ENCODE measurements at regions of chr6 and their contacts with region 1.

Region 1: DNA sequence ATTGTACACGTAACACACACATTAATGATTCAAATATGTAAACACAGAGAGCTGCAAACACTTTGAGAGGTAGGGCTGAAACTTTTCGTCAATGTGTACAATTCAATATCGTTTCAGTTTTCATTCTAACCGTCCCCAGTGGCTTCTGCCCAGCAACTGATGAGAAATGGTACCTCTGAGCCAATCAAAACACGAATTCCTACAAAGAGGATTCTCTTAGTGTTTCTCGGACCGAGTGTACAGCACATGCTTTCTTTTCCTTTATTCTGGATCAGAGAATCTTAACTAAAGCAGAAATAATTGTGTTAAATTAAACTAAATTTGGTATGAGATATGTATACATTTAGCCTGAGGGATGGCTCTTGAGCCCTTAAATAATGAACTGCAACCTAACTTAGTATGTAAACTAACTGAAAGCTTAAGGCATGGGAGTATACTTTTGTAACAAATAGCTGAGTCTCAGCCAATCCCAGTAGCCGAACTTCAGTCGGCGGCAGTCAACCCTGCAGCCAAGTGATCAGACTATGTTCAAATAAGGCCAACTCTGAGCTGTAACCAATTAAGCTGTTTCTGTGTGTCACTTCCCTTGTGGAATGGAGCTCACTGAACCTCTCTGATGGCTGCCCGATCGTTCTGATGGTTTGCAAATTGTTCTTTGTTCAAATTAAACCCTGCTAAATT is 16.1 kb downstream of the BTN2A1 start:
- DNase-seq: peak; percentile 60 to 96 (median 76)
- ATAC-seq: peak; percentile 91
- H3K4me3 ChIP-seq: peak overlapping the region; percentile 56
- H3K4me3 Mint-ChIP-seq: peak overlapping the region; percentile 94
- H3K27ac ChIP-seq: peak overlapping the region; percentile 85 to 90
- H3K27ac Mint-ChIP-seq: peak overlapping the region; percentile 99
- H3K4me1 ChIP-seq: peaks cover 45% of the 10 kb centered on the region
- H3K4me1 Mint-ChIP-seq: peaks cover 64% of the 10 kb centered on the region
- H3K27me3 ChIP-seq: no peaks in the 10 kb centered on the region
- H3K27me3 Mint-ChIP-seq: no peaks in the 10 kb centered on the region
- CTCF ChIP-seq: no peak

Region 2: DNA sequence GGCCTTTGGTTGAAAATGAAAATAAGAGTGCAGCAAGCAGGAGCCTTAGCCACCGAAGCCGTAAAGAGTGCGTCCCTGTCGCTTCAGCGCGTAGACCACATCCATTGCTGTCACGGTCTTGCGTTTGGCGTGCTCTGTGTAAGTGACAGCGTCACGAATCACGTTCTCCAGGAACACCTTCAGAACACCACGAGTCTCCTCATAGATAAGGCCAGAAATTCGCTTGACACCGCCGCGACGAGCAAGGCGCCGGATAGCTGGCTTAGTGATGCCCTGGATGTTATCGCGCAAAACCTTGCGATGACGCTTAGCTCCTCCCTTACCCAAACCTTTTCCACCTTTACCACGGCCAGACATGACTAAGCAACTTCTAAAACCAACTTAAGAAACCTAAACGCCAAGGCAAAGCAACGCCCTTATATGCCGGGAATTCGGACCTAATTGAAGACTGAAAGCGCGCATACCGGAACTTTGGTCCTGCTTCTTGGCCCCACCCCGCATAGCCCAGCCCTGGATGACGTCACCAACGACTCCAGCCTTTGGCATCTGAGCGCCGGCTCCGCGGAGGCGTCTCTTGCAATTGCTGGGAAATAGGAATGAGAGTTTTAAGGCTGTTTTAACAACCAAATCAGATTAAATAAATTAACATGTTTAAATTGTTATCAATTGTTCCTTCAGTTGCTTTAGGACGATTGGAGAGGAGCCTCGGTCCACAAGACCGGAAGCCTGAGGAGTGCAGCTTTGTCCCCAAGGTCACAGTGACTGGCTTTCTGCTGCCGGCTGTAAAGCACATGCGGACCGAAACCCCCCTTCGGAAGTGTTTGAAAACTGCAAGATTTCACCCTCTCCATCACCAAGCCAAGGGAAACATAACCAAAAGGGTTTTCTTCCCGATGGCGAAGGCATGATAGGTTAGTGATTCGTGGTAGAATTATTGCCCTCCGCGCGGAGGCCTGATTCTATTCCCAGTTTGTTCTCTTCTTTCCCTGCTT is 188.5 kb before region 1 on chr6:
- CTCF ChIA-PET with region 1: no interaction called
- POLR2A ChIA-PET with region 1: interaction called, 12 read pairs
- intact Hi-C with region 1: no loop called
- DNase-seq: peak; percentile 85 to 99 (median 92)
- ATAC-seq: peak; percentile 82
- H3K4me3 ChIP-seq: peak overlapping the region; percentile 62
- H3K4me3 Mint-ChIP-seq: peak overlapping the region; percentile 87
- H3K27ac ChIP-seq: peak overlapping the region; percentile 82 to 85
- H3K27ac Mint-ChIP-seq: peak overlapping the region; percentile 96
- H3K4me1 ChIP-seq: peaks cover 16% of the 10 kb centered on the region
- H3K4me1 Mint-ChIP-seq: peaks cover 24% of the 10 kb centered on the region
- H3K27me3 ChIP-seq: no peaks in the 10 kb centered on the region
- H3K27me3 Mint-ChIP-seq: peaks cover 11% of the 10 kb centered on the region
- CTCF ChIP-seq: no peak

Region 3: DNA sequence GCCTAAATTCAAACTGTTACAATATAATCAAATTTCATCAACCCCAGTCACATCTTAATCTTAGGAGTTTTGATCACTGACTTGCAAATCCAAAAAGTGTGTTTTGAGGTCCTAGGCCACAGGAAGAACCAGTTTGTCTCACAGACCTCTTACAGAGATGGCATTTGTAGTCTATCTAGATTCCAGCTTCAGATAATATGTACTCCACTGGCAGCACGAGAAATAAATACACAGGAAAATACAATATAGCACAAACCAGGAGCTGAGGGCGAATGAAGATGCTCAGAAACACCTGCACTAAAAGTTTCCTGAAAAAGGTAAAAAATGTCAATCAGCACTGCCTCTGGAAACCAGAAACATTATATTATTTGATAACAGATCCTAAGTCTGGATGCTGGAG is 34.2 kb before region 1 on chr6:
- CTCF ChIA-PET with region 1: no interaction called
- POLR2A ChIA-PET with region 1: interaction called, 15 read pairs
- intact Hi-C with region 1: loop called in 1 of 2 experiments (anchors 1 kb)
- DNase-seq: peak in 1 of 14 experiments; percentile 50
- ATAC-seq: no peak
- H3K4me3 ChIP-seq: peak overlapping the region; percentile 89
- H3K4me3 Mint-ChIP-seq: peak overlapping the region; percentile 93
- H3K27ac ChIP-seq: peak overlapping the region; percentile 86 to 95
- H3K27ac Mint-ChIP-seq: peak overlapping the region; percentile 99
- H3K4me1 ChIP-seq: peaks cover 28% of the 10 kb centered on the region
- H3K4me1 Mint-ChIP-seq: peaks cover 54% of the 10 kb centered on the region
- H3K27me3 ChIP-seq: no peaks in the 10 kb centered on the region
- H3K27me3 Mint-ChIP-seq: no peaks in the 10 kb centered on the region
- CTCF ChIP-seq: no peak

Region 4: DNA sequence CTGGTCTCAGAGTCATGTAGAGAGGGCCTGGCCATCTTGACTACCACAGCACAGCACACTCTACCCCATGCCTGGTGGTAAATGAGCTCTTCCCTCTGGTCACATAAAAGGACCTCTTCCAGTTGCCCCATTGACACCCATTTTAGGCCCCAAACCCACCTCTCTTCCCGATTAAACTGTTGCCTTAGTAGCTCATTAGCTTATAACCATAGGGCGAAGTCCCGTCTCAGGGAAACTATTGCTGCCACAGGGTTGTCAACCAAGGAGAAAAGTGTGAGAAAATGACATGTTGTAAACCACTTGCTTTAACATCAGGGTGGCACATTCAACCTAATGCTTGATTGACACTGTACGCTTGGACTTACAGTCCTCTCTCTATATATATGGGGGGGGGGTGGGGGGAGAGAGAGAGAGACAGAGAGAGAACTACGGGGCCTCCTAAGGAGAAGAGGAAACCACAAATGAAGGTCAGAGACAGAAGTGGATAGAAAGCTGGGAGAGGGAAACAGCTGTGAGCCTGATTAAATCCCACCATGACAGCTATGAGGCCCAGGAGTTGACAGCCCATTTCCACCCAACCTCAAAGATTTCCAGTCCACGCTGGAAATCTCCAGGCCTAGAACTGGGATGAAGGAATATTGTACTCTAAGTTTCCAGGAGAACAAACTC is 11.3 kb after region 1 on chr6:
- CTCF ChIA-PET with region 1: no interaction called
- POLR2A ChIA-PET with region 1: interaction called, 10 read pairs
- intact Hi-C with region 1: no loop called
- DNase-seq: no peak
- ATAC-seq: no peak
- H3K4me3 ChIP-seq: no peak overlapping the region
- H3K4me3 Mint-ChIP-seq: no peak overlapping the region
- H3K27ac ChIP-seq: no peak overlapping the region
- H3K27ac Mint-ChIP-seq: no peak overlapping the region
- H3K4me1 ChIP-seq: no peaks in the 10 kb centered on the region
- H3K4me1 Mint-ChIP-seq: no peaks in the 10 kb centered on the region
- H3K27me3 ChIP-seq: no peaks in the 10 kb centered on the region
- H3K27me3 Mint-ChIP-seq: no peaks in the 10 kb centered on the region
- CTCF ChIP-seq: no peak

Region 5: DNA sequence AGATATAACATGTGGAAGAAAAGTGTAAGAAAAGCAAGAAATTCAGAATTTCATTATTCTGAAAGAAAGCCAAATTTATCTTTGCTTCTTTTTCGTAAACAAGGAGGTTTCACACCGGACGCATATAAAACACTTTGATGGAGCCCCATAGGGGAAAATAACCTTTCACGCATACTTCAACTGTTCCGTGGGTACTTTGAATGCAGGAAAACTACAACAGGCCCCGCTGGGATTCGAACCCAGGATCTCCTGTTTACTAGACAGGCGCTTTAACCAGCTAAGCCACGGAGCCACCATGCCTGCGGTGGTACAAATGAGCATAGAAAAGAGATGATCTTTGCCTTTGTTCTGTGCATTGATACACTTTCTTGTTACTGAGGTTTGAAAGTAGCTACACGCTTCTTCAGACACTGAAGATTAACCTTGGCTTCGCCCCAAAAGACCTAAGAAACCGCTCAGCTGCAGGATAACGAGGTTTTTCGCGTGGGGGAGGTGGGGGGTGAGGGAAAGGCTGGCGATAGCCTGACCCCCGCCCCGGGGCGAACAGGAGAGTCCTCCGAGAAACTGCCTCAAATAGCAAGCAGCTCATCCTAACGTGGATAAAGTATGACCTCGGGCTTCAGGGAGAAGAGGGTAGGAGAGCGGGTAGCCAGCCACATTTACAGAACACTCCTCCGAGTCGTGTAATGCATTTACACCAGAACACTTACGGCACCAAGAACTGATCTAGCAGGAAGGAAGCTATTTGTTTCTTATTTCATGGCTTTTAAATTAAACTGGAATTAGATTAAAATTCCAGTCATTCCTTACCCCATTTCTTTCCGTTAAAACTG is 59.0 kb after region 1 on chr6:
- CTCF ChIA-PET with region 1: interaction called, 4 read pairs
- POLR2A ChIA-PET with region 1: interaction called, 102 read pairs
- intact Hi-C with region 1: loop called in 1 of 2 experiments (anchors 2 kb)
- DNase-seq: peak; percentile 79 to 96 (median 90)
- ATAC-seq: peak; percentile 36
- H3K4me3 ChIP-seq: peak overlapping the region; percentile 72
- H3K4me3 Mint-ChIP-seq: peak overlapping the region; percentile 98
- H3K27ac ChIP-seq: peak overlapping the region; percentile 20 to 59
- H3K27ac Mint-ChIP-seq: peak overlapping the region; percentile 97
- H3K4me1 ChIP-seq: peaks cover 28% of the 10 kb centered on the region
- H3K4me1 Mint-ChIP-seq: peaks cover 50% of the 10 kb centered on the region
- H3K27me3 ChIP-seq: no peaks in the 10 kb centered on the region
- H3K27me3 Mint-ChIP-seq: peaks cover 16% of the 10 kb centered on the region
- CTCF ChIP-seq: no peak

Region 6: GRCh38 chr6:26568601-26569432 is 94.9 kb after region 1 on chr6:
- CTCF ChIA-PET with region 1: interaction called, 4 read pairs
- POLR2A ChIA-PET with region 1: interaction called, 10 read pairs
- intact Hi-C with region 1: no loop called
- DNase-seq: peak; percentile 96 to 100 (median 98)
- ATAC-seq: peak; percentile 74
- H3K4me3 ChIP-seq: peak overlapping the region; percentile 55
- H3K4me3 Mint-ChIP-seq: peak overlapping the region; percentile 97
- H3K27ac ChIP-seq: peak overlapping the region; percentile 37 to 53
- H3K27ac Mint-ChIP-seq: peak overlapping the region; percentile 100
- H3K4me1 ChIP-seq: peaks cover 21% of the 10 kb centered on the region
- H3K4me1 Mint-ChIP-seq: peaks cover 29% of the 10 kb centered on the region
- H3K27me3 ChIP-seq: no peaks in the 10 kb centered on the region
- H3K27me3 Mint-ChIP-seq: peaks cover 16% of the 10 kb centered on the region
- CTCF ChIP-seq: peak; percentile 58

Region 7: DNA sequence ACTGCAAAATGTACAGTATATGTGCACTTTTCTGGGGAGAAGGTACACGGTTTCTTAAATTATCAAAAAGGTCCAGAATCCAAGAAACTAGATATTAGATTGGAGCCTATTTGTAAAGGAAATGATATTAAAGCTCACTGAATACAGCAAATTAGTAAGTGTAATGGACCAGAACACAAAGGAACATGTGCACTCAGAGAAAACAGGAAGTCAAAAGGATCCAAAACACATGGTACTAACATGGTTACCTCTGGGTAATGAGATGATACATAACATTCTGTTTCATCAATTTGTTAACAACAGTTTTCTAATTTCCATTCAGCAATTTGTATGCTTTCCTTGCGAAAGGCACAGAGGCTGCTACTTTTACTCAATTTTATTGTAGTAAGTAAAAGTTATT is 166.9 kb after region 1 on chr6:
- CTCF ChIA-PET with region 1: no interaction called
- POLR2A ChIA-PET with region 1: no interaction called
- intact Hi-C with region 1: no loop called
- DNase-seq: no peak
- ATAC-seq: no peak
- H3K4me3 ChIP-seq: no peak overlapping the region
- H3K4me3 Mint-ChIP-seq: no peak overlapping the region
- H3K27ac ChIP-seq: no peak overlapping the region
- H3K27ac Mint-ChIP-seq: no peak overlapping the region
- H3K4me1 ChIP-seq: no peaks in the 10 kb centered on the region
- H3K4me1 Mint-ChIP-seq: no peaks in the 10 kb centered on the region
- H3K27me3 ChIP-seq: no peaks in the 10 kb centered on the region
- H3K27me3 Mint-ChIP-seq: no peaks in the 10 kb centered on the region
- CTCF ChIP-seq: no peak

Region 8: GRCh38 chr6:27019651-27020552 is 546.0 kb after region 1 on chr6:
- CTCF ChIA-PET with region 1: no interaction called
- POLR2A ChIA-PET with region 1: no interaction called
- intact Hi-C with region 1: no loop called
- DNase-seq: peak in 10 of 14 experiments; percentile 4 to 65 (median 35)
- ATAC-seq: no peak
- H3K4me3 ChIP-seq: peak overlapping the region; percentile 68
- H3K4me3 Mint-ChIP-seq: peak overlapping the region; percentile 73
- H3K27ac ChIP-seq: peak overlapping the region in 1 of 2 donors; percentile 32
- H3K27ac Mint-ChIP-seq: no peak overlapping the region
- H3K4me1 ChIP-seq: peaks cover 14% of the 10 kb centered on the region
- H3K4me1 Mint-ChIP-seq: peaks cover 6% of the 10 kb centered on the region
- H3K27me3 ChIP-seq: peaks cover 0 to 13% of the 10 kb centered on the region in 2 experiments
- H3K27me3 Mint-ChIP-seq: peaks cover 41% of the 10 kb centered on the region
- CTCF ChIP-seq: no peak

Measured in CD4-positive, alpha-beta T cell (primary cell).